Right lobe of liver (tissue), 6 donors: ENCODE measurements at regions of chr14 and their contacts with region 1.

Region 1: DNA sequence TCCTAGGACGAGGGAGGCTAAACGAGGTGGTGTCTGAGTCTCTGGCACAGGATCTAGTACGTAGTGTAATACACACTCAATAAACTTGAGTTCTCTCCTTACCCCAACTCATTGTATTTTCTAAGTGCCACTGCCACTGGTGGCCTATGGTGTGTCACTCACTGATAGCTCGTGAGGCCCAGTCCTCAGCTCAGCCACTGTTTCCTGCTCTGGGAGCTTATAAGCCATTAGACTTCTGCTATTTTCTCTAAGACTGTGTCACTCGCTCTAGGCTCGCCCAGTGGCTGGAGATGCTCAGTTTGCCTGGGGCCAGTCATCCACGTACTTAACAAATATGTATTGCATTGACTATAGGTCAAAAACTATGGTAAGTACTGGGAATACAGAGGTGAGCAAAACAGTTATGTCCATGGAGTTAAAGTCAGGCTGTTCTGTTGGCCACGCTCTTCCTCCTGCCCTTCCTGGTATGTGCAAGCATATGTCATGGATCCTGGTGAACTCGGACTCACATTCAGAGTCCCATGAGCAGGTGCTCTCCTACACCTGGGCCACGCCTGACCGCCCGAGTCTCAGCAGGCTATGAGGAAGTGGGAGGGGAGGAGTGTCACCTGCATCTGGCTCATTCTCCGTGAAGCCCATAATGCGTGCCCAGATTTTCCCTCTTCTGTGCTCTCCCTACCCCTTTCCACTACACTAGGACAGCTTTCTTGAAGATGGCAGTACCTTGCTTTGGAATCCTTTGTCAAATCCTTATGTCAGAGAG is 41.6 kb downstream of the DEGS2 start:
- DNase-seq: peak in 1 of 3 donors; percentile 31
- ATAC-seq: no peak
- H3K4me3 ChIP-seq: no peak overlapping the region
- H3K27ac ChIP-seq: no peak overlapping the region
- H3K4me1 ChIP-seq: no peaks in the 10 kb centered on the region
- H3K27me3 ChIP-seq: no peaks in the 10 kb centered on the region
- CTCF ChIP-seq: no peak
- POLR2A ChIP-seq: no peak

Region 2: DNA sequence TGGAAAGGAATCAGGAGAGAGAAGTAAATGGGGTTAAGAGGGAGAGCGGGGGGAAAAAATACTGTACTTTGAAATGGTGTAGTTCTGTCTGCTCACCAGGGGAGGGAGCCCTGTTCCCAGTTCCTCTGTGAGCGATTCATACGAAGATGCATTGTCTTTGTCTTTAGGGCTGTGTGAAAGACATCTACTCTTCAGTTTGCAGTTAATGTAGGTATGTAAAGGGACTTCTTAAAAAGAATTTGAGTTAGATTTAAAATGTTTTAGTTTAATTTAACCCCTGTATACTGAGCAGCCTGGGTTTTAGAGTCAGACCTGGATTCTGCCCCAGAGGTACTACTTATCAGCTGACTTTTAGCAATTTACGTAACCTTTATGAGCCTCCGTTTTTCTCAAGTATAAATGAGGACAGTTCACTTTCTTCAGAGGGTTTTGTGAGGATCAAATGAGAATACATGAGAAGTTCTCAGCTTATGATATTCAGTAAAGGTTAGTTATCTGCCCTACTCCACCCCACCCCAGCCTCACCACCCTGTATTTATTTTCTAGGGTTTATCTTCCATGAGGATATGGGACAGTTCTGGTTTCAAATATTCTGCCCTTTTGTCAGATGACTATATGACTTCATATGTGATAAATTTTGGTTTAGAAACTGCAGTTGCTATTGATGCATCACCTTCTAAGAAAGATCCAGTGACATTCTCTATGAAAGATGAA is 135.1 kb before region 1 on chr14:
- intact Hi-C with region 1: loop called in 1 of 2 experiments (anchors 10 kb)
- DNase-seq: no peak
- ATAC-seq: peak; percentile 91 to 97 (median 94)
- H3K4me3 ChIP-seq: no peak overlapping the region
- H3K27ac ChIP-seq: no peak overlapping the region
- H3K4me1 ChIP-seq: peaks cover 0 to 29% (median 11%) of the 10 kb centered on the region in 4 donors
- H3K27me3 ChIP-seq: no peaks in the 10 kb centered on the region
- CTCF ChIP-seq: peak; percentile 80 to 91 (median 85)
- POLR2A ChIP-seq: no peak

Region 3: DNA sequence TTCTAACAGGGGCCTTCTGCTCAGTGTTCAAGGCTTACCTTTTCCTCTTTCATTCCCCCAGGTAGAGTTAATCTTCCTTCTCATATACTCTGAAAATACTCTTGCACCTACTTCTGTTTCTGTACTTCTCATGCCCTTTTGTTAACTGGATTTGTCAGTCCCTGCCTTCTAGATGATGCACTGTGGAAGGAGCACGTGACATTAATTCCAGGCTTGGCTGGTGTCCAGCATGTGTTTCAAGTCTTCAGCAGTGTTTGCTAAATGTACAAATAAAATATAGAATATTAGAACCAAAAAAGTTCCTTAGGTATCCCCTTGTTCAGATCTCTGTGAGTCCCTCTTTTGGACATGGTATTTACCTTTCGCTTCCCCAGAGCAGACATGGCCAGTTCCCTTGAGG is 80.5 kb before region 1 on chr14:
- intact Hi-C with region 1: no loop called
- DNase-seq: no peak
- ATAC-seq: no peak
- H3K4me3 ChIP-seq: no peak overlapping the region
- H3K27ac ChIP-seq: no peak overlapping the region
- H3K4me1 ChIP-seq: peaks cover 0 to 23% (median 7%) of the 10 kb centered on the region in 4 donors
- H3K27me3 ChIP-seq: no peaks in the 10 kb centered on the region
- CTCF ChIP-seq: no peak
- POLR2A ChIP-seq: no peak